A549 (cell line): ENCODE measurements at regions of chr11 and their contacts with region 1.

Region 1: DNA sequence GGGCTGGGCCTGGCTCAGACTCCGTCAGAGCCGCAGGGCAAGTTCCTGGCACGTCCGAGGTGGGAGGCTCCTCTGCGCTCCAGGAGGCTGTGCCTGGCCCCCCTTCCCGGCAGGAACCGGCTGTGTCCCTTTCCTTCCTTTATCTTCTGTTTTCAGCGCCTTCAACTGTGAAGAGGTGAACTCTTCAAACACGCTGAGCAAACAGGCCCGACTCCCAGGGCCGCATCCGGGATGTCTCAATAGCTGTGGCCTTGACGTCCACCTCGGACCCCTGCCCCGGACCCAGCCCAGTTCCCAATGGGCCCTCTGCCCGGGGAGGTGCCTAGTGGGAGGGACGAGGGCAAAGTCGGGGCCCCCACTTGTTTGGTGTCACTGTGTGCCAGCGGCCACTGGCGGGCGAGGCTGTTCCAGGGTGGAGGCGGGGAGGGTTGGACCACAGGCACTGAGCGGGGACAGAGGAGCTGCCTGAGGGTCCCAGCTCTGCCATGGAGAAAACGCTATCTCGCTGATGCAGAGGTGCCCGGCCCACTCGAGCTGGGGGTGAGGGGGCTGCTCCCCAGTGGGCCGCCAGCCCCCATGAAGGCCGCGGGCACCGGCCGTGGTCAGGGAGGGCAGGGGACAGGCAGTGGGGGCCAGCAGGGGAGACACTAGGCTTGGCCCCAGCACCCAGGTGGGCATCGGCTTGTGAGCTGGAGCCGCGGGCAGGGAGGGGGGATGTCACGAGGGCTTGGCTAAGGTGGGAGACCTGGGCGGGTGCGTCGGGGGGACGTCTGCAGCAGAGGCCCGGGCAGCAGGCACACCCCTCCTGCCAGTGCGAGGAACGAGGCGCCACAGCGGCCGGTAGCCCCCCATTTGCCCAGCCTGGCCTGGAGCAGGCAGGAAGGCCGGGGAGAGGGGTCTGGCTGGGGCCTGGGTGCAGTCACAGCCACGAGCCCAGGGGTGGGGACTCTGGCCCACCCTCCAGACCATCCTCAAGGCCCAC is 2.7 kb upstream of the MUC5B start:
- DNase-seq: peak in 1 of 2 experiments; percentile 84
- ATAC-seq: peak; percentile 25 to 58; a peak in 5 of 6 replicates
- H3K4me3 ChIP-seq: no peak overlapping the region
- H3K27ac ChIP-seq: peak overlapping the region; percentile 78 to 81
- H3K4me1 ChIP-seq: peaks cover 62% of the 10 kb centered on the region
- CTCF ChIP-seq: no peak
- EP300 ChIP-seq: peak; percentile 71 to 74; a peak in 3 of 5 replicates
- POLR2A ChIP-seq: no peak
- RAD21 ChIP-seq: 0 out of 5 replicates have a peak, but pooled peaks of 1 of the 2 experiments have one; percentile 19

Region 2: GRCh38 chr11:1113405-1114201 is 106.5 kb before region 1 on chr11:
- CTCF ChIA-PET with region 1: interaction called, 13 read pairs
- POLR2A ChIA-PET with region 1: no interaction called
- DNase-seq: no peak
- ATAC-seq: peak; percentile 28 to 34; a peak in 4 of 6 replicates
- H3K4me3 ChIP-seq: no peak overlapping the region
- H3K27ac ChIP-seq: peak overlapping the region; percentile 2 to 41; a peak in 4 of 6 replicates
- H3K4me1 ChIP-seq: 0 out of 3 replicates have a peak, but pooled peaks cover 5% of the 10 kb centered on the region
- CTCF ChIP-seq: no peak
- EP300 ChIP-seq: no peak
- POLR2A ChIP-seq: no peak
- RAD21 ChIP-seq: no peak